ENCODE measurements at regions of chr17 and their contacts with region 1.

Region 1: DNA sequence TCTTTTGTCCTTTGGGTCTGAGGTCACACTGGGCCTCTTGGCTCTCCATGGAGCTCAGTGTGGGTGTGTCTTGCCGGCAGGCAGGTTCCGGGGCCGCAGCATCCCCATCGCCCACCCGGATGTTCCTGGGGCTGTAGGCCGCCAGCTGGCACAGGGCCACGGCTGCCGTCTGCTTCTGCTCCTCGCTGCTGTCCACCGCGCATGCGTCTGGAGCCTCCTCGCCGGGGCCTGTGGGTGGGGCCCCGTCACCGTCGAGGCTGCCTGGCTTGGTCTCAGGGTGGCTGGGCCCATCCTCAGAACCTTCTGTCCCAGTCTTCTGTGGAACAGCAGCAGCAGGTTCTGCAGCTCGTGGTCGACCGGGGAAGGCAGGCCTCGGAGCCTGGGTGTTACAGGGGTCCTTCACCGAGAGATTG is 9.6 kb downstream of the ZNF750 start:
- DNase-seq: no peak
- H3K4me3 ChIP-seq: no peak overlapping the region
- H3K27ac ChIP-seq: no peak overlapping the region
- H3K4me1 ChIP-seq: peaks cover 12% of the 10 kb centered on the region
- H3K27me3 ChIP-seq: no peaks in the 10 kb centered on the region
- CTCF ChIP-seq: no peak

Region 2: DNA sequence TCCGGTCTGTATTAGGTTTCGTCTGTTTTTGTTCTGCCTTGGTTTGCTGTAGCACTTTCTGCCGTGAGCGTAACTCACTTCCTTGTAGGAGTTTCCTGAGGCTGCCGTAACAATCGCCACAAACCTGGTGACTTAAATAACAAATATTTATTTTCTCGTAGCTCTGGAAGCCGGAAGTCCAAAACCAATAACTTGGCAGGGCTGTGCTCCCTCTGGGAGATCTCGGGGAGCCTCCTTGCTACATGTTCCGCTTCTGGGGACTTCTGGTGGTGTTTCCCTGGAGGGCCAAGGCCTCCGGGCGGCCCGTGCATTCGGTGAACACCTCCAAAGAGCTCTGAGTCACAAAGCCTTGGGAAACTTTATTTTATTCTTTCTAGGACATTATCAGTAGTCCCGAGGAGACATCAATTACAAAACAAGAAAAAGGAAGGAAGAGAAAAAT is 175.2 kb before region 1 on chr17:
- CTCF ChIA-PET with region 1: no interaction called
- dilution Hi-C with region 1: no loop called
- in situ Hi-C with region 1: no loop called
- intact Hi-C with region 1: no loop called
- DNase-seq: no peak
- H3K4me3 ChIP-seq: no peak overlapping the region
- H3K27ac ChIP-seq: no peak overlapping the region
- H3K4me1 ChIP-seq: no peaks in the 10 kb centered on the region
- H3K27me3 ChIP-seq: no peaks in the 10 kb centered on the region
- CTCF ChIP-seq: no peak

Region 3: DNA sequence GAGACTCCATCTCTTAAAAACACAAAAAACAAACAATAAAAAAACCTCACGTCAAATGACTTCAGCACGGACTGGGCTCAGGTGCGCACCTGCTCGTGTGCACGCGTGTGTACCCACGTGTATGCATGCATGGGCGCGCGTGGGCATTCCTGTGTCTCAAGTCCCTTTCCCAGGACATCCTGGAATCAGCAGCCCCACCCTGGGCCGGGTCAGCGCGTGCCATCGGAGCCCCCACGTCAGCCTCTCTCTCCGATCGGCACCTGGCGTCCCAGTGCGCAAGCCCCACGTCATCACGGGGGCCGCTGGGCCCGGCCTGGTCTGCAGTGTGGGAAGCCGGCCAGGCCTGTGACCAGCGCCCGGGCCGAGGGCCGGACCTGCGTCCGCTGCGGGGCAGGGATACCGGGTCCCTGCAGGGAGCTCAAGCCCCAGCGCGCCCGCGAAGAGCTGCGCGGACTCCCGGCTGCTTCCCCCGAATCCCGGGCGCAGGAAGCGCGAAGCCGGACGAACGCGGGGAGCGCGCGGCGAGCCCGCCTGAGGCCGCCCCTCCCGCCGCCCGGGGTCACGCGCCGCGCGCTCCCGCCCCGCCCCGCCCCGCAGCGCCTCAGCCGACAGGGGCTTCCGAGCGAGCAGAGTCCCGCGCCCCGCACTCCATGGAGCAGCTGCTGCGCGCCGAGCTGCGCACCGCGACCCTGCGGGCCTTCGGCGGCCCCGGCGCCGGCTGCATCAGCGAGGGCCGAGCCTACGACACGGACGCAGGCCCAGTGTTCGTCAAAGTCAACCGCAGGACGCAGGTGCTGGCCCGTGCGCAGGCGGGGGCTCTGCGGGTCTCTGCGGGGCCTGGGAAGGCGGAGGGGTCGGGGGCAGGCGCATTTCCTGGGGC is 95.0 kb before region 1 on chr17 and contains the start of gene FN3K:
- CTCF ChIA-PET with region 1: no interaction called
- dilution Hi-C with region 1: no loop called
- in situ Hi-C with region 1: no loop called
- intact Hi-C with region 1: no loop called
- DNase-seq: peak; percentile 29
- H3K4me3 ChIP-seq: peak within 1 kb of the TSS; percentile 50 to 56 (median 52)
- H3K27ac ChIP-seq: no peak within 1 kb of the TSS
- H3K4me1 ChIP-seq: peaks cover 7% of the 10 kb centered on the region
- H3K27me3 ChIP-seq: no peaks in the 10 kb centered on the region
- CTCF ChIP-seq: no peak
- total RNA-seq, gene FN3K: 2.2 to 4.2 TPM

Region 4: DNA sequence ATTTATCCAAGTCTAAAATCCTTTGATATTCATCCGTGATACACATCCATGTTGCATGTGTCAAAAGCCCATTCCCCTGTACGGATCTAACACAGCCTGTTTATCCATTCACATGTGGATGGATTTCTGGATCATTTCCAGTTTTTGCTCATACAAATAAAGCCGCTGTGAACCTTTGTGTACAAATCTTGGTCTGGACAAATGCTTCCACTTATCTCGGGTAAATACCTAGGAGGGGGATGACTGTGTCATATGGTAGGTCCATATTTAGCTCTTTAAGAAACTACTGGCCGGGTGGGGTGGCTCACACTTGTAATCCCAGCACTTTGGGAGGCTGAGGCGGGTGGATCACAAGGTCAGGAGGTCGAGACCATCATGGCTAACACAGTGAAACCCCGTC is 84.7 kb before region 1 on chr17:
- CTCF ChIA-PET with region 1: no interaction called
- dilution Hi-C with region 1: loop called (anchors 5 kb)
- in situ Hi-C with region 1: no loop called
- intact Hi-C with region 1: no loop called
- DNase-seq: no peak
- H3K4me3 ChIP-seq: no peak overlapping the region
- H3K27ac ChIP-seq: no peak overlapping the region
- H3K4me1 ChIP-seq: no peaks in the 10 kb centered on the region
- H3K27me3 ChIP-seq: no peaks in the 10 kb centered on the region
- CTCF ChIP-seq: no peak

Region 5: DNA sequence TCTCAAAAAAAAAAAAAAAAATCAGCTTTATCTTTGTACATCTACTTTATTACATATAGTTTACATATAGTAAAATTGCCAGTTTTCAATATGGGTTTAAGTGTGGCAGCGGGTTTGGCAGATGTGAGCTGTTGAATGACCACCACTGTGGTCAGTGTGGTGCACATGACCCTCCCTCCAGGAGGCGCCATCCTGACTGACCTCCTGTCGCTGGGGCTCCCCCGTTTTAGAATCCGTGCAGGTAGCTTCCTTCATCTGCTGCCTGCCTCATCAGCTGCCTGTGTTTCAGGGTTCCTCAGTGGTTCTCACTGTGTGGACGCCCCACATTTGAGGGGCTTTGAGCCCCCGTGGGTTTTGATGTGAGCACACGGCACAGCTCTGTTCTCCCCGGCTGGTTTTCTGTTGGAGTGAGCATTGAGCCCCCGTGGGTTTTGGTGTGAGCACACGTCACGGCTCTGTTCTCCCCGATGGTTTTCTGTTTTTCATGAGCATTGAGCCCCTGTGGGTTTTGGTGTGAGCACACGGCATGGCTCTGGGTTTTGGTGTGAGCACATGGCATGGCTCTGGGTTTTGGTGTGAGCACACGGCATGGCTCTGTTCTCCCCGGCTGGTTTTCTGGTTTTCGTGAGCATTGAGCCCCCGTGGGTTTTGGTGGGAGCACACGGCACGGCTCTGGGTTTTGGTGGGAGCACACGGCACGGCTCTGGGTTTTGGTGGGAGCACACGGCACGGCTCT is 67.4 kb after region 1 on chr17:
- CTCF ChIA-PET with region 1: no interaction called
- dilution Hi-C with region 1: loop called (anchors 5 kb)
- in situ Hi-C with region 1: no loop called
- intact Hi-C with region 1: no loop called
- DNase-seq: no peak
- H3K4me3 ChIP-seq: no peak overlapping the region
- H3K27ac ChIP-seq: no peak overlapping the region
- H3K4me1 ChIP-seq: no peaks in the 10 kb centered on the region
- H3K27me3 ChIP-seq: no peaks in the 10 kb centered on the region
- CTCF ChIP-seq: no peak

Measured in mammary epithelial cell (primary cell).